Mammary epithelial cell (primary cell): ENCODE measurements at regions of chr15 and their contacts with region 1.

Region 1: DNA sequence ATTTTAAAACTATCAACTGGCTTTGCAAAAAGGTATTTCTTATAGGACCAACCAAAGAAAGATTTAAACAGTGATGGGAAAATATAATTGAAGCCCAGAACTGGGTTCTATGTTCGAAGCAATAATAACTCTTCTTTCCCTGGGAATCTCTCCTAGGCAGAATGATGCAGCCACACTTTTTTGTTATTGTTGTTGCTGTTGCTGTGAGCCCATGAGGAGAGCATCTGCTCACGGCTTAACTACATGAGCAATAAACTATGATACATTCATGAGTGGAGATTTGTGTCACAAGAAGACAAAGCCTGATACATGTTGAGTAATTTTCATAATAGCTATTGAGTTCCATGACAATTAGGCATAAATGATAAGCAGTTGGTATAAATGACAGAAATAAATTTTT is 80.5 kb downstream of the CRTC3 start:
- DNase-seq: no peak
- H3K4me3 ChIP-seq: no peak overlapping the region
- H3K27ac ChIP-seq: no peak overlapping the region
- H3K4me1 ChIP-seq: no peaks in the 10 kb centered on the region
- H3K27me3 ChIP-seq: no peaks in the 10 kb centered on the region
- CTCF ChIP-seq: no peak

Region 2: DNA sequence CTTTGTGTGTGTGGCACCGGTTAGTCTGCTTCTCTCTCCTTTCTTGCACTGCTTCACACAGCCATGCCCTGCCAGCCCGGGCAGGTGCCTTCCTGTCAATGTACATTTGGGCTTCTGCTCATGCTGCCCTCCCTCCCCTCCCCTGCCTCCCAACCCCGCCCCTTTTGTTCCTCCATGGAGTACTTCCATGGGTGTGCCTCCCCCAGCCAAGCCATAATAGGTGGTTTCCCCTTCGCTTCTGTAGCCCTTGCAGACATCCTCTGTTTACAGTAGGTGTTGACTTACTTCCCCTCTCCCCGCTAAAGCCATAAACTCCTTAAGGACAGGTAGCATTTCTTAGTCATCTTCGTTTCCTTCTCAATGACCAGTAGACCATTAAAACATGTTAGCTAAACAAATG is 112.3 kb before region 1 on chr15:
- CTCF ChIA-PET with region 1: no interaction called
- dilution Hi-C with region 1: no loop called
- in situ Hi-C with region 1: no loop called
- intact Hi-C with region 1: no loop called
- DNase-seq: no peak
- H3K4me3 ChIP-seq: no peak overlapping the region
- H3K27ac ChIP-seq: no peak overlapping the region
- H3K4me1 ChIP-seq: no peaks in the 10 kb centered on the region
- H3K27me3 ChIP-seq: no peaks in the 10 kb centered on the region
- CTCF ChIP-seq: no peak

Region 3: GRCh38 chr15:90519688-90520087 is 90.5 kb before region 1 on chr15:
- CTCF ChIA-PET with region 1: no interaction called
- dilution Hi-C with region 1: loop called (anchors 5 kb)
- in situ Hi-C with region 1: no loop called
- intact Hi-C with region 1: no loop called
- DNase-seq: peak; percentile 31
- H3K4me3 ChIP-seq: no peak overlapping the region
- H3K27ac ChIP-seq: no peak overlapping the region
- H3K4me1 ChIP-seq: peaks cover 8% of the 10 kb centered on the region
- H3K27me3 ChIP-seq: no peaks in the 10 kb centered on the region
- CTCF ChIP-seq: no peak

Region 4: GRCh38 chr15:90660195-90660998 is 50.2 kb after region 1 on chr15:
- CTCF ChIA-PET with region 1: no interaction called
- dilution Hi-C with region 1: loop called (anchors 5 kb)
- in situ Hi-C with region 1: no loop called
- intact Hi-C with region 1: no loop called
- DNase-seq: peak; percentile 98
- H3K4me3 ChIP-seq: peak overlapping the region in 1 of 3 experiments; percentile 24
- H3K27ac ChIP-seq: peak overlapping the region; percentile 74
- H3K4me1 ChIP-seq: peaks cover 29% of the 10 kb centered on the region
- H3K27me3 ChIP-seq: no peaks in the 10 kb centered on the region
- CTCF ChIP-seq: no peak

Region 5: DNA sequence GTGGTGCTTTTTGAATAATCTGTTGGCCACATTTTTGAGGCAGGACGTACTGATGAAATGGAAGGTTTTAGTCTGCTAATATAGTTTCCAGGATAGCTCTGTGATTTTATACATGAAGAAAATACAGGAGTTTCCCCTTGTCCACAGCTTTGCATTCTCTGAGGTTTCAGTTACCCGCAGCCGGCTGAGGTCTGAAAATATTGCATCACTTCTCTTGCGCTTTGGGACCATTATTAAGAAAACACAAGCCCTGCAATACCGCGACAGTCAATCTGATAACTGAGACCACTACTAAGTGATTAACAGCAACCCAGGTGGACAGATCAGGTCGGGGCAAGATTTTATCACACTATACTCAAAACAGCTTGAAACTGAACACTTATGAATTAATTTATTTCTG is 140.0 kb after region 1 on chr15:
- CTCF ChIA-PET with region 1: no interaction called
- dilution Hi-C with region 1: no loop called
- in situ Hi-C with region 1: no loop called
- intact Hi-C with region 1: no loop called
- DNase-seq: no peak
- H3K4me3 ChIP-seq: no peak overlapping the region
- H3K27ac ChIP-seq: no peak overlapping the region
- H3K4me1 ChIP-seq: no peaks in the 10 kb centered on the region
- H3K27me3 ChIP-seq: no peaks in the 10 kb centered on the region
- CTCF ChIP-seq: no peak